Cardiac septum (tissue), 1 donor: ENCODE measurements at regions of chr10 and their contacts with region 1.

Region 1: GRCh38 chr10:100433253-100434240 is 29.3 kb upstream of the WNT8B start:
- DNase-seq: peak; percentile 88

Region 2: GRCh38 chr10:100338434-100339036 is 95.0 kb before region 1 on chr10:
- intact Hi-C with region 1: loop called (anchors 1 kb)
- DNase-seq: peak; percentile 81

Region 3: GRCh38 chr10:100470367-100470766 is 36.8 kb after region 1 on chr10:
- intact Hi-C with region 1: no loop called
- DNase-seq: no peak

Region 4: DNA sequence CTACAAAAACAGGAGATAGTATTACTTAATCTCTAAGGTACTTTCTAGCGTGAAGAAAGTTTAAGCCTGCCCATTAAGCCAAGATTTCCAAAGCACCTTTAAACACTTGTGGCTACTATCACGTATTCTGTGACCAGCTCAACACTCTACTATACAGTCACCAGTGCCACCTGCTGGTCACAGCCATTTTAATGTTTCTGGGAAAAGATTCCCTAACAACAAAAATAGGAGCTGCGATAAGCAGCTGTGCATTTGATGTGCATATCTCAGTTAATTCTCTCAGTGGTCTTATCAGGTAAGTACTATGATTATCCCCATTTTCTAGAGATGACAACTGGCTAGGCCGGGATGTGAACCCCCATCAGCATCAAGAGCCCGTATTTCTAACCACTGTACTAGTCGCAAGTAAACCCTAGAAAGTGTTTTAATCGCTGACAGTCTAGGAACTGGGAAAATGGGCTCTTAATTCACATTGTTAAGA is 85.3 kb after region 1 on chr10:
- intact Hi-C with region 1: loop called (anchors 5 kb)
- DNase-seq: no peak

Region 5: DNA sequence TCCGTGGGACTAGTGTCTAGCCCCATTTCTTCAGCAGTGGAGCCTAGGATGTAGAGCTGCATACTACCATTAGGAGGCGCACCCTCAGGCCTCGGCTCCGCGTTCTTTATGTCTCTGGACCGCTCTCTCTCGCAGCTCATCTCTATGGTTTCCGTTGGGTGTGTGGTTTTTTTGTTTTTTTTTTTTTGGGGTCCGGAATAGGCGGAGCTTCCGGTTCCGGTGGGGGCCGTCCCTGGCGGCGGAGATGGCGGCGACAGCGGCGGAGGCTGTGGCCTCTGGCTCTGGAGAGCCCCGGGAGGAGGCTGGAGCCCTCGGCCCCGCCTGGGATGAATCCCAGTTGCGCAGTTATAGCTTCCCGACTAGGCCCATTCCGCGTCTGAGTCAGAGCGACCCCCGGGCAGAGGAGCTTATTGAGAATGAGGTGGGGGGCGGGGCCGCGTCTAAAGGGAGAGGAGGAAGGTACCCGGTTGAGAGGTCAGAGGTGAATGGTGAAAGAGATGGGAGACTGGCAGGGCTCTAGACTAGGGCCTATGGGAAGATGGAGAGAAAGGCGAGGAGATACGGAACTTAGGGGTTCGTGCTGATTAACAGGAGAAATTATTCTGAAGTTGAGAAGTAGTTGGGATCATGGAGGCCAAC is 102.3 kb after region 1 on chr10 and contains the start of gene HIF1AN:
- intact Hi-C with region 1: no loop called
- DNase-seq: peak; percentile 93
- total RNA-seq, gene HIF1AN: 53.7 TPM

Region 6: GRCh38 chr10:100766693-100767421 is 333.3 kb after region 1 on chr10:
- intact Hi-C with region 1: no loop called
- DNase-seq: no peak